ENCODE measurements at regions of chr5 and their contacts with region 1.

Region 1: DNA sequence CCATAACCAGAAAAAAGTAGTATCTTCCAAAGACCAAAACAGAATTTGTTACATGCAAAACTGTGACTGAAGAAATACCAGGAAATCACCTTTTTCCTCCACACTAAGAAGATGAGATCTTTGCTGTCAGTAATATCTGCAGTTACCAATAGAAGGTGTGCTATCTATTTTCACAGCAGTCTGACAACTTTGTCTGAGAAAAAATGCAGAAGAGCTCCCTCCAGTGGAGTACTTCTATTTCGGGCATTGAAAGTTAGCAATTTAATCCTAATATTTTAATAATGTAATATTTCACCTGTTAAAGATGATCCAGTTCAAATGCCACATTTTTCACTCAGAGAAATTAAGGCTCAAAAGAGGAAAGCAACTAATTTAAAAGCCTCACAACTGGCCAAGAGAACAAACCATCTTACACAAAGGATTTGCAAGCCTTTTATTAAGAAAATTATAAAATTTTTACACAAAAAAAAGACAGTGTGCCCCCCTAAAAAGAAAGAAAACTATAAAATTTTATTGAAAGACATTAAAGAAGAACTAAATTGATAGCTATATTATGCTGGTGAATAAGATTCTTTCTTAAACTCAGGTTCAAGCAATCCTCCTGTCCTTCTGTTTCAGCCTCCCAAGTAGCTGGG is 50.6 kb downstream of the DEPDC1B start:
- DNase-seq: peak; percentile 48
- H3K4me3 ChIP-seq: no peak overlapping the region
- H3K27ac ChIP-seq: no peak overlapping the region
- H3K4me1 ChIP-seq: no peaks in the 10 kb centered on the region
- H3K27me3 ChIP-seq: no peaks in the 10 kb centered on the region
- CTCF ChIP-seq: peak; percentile 50 to 51
- POLR2A ChIP-seq: no peak

Region 2: GRCh38 chr5:60295423-60295822 is 354.0 kb before region 1 on chr5:
- CTCF ChIA-PET with region 1: interaction called, 3 read pairs
- POLR2A ChIA-PET with region 1: no interaction called
- dilution Hi-C with region 1: no loop called
- intact Hi-C with region 1: loop called (anchors 1 kb)
- DNase-seq: peak; percentile 16
- H3K4me3 ChIP-seq: no peak overlapping the region
- H3K27ac ChIP-seq: no peak overlapping the region
- H3K4me1 ChIP-seq: no peaks in the 10 kb centered on the region
- H3K27me3 ChIP-seq: no peaks in the 10 kb centered on the region
- CTCF ChIP-seq: peak in 1 of 2 donors; percentile 43
- POLR2A ChIP-seq: no peak

Region 3: GRCh38 chr5:60633341-60633740 is 16.1 kb before region 1 on chr5:
- CTCF ChIA-PET with region 1: interaction called, 15 read pairs
- POLR2A ChIA-PET with region 1: no interaction called
- dilution Hi-C with region 1: no loop called
- intact Hi-C with region 1: no loop called
- DNase-seq: peak; percentile 46
- H3K4me3 ChIP-seq: no peak overlapping the region
- H3K27ac ChIP-seq: no peak overlapping the region
- H3K4me1 ChIP-seq: no peaks in the 10 kb centered on the region
- H3K27me3 ChIP-seq: no peaks in the 10 kb centered on the region
- CTCF ChIP-seq: no peak
- POLR2A ChIP-seq: no peak

Region 4: DNA sequence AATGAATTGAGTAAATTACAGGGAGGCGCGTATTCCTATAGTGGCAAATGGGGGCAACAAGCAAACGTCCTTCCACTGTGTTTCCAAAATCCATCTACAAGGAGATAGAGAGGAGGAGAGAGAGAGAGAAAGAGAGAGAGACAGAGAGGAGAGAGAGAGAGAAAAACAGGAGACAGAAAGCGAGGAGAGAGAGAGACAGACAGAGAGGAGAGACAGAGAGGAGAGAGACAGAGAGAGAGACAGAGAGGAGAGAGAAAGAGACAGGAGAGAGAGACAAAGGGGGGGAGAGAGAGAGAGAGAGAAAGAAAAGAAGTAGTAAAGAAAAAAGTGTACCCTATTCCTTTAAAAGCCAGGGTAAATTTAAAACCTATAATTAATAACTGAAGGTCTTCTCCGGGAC is 10.6 kb after region 1 on chr5:
- CTCF ChIA-PET with region 1: interaction called, 10 read pairs
- POLR2A ChIA-PET with region 1: no interaction called
- dilution Hi-C with region 1: no loop called
- intact Hi-C with region 1: no loop called
- DNase-seq: no peak
- H3K4me3 ChIP-seq: no peak overlapping the region
- H3K27ac ChIP-seq: no peak overlapping the region
- H3K4me1 ChIP-seq: no peaks in the 10 kb centered on the region
- H3K27me3 ChIP-seq: no peaks in the 10 kb centered on the region
- CTCF ChIP-seq: no peak
- POLR2A ChIP-seq: no peak

Region 5: DNA sequence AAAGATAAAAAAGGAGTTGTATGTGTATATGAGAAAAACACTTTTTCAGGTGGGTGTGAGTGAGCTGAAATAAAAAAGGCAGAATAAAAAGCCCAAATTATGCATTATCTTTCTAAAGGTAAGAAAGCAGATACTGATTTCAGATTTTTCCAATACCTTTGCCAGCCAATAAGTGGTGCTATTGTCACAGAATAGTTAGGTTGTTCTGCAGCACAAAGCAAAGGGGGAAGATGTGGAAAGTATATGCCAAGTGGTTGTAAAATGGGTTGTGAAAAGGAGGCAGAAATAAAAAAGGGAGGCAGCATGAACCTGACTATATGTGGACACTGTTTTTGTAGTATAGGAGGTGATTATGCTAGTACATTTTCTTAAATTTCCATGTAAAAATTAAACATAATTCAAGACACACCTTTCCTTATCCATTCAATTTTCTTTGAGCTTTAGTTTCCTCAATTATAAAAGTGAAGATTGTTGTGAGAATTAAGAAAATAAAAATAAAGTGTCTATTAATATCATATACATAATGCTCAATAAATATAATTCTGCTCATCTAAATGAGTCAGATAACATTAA is 406.1 kb after region 1 on chr5:
- CTCF ChIA-PET with region 1: no interaction called
- POLR2A ChIA-PET with region 1: no interaction called
- dilution Hi-C with region 1: no loop called
- intact Hi-C with region 1: no loop called
- DNase-seq: peak; percentile 66
- H3K4me3 ChIP-seq: no peak overlapping the region
- H3K27ac ChIP-seq: no peak overlapping the region
- H3K4me1 ChIP-seq: peaks cover 13% of the 10 kb centered on the region
- H3K27me3 ChIP-seq: no peaks in the 10 kb centered on the region
- CTCF ChIP-seq: peak; percentile 50 to 54
- POLR2A ChIP-seq: no peak

Measured in endothelial cell of umbilical vein (primary cell).